OCI-LY7 (cell line): ENCODE measurements at regions of chr19 and their contacts with region 1.

Region 1: DNA sequence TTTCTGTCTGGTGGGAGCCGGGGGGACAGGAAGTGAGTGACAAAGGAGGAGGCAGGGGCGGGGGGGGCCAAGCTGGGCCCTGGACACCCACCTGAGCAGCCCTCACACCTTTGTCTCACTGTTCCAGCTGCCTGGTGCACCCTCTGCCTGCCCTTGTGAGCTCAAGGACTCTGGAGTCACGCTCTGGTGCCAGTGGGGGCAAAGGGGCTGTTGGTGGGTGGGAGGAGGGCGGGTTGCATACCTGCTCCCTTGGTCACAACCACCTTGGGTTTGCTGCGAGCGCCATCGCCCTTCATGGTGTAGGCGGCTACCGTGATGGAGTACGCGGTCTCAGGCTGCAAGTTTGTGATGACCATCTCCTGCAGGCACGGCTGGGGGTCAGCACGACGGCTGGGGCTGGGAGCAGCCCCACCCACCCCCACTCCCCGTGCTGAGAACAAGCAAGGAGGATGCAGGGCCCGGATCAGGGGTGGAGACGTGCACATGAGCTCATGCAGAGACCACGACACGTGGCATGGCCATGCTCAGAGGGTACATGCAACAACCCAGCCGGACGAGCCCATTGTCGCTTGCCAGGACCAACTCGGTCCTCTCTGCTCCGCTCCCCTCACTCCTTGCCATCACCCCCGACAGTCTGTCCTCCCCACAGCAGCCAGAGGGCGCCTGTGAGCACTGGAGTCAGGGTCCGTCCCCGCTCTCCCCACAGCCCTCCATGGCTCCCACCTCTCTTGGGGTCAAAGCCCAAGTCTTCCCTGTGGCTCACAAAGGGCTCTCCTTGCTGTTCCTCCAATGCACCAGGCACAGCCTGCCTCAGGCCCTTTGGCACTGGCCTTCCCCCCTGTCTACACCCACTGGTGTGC is 114.9 kb downstream of the PTPRS start:
- DNase-seq: peak; percentile 33
- H3K4me3 ChIP-seq: no peak overlapping the region
- H3K27ac ChIP-seq: no peak overlapping the region
- H3K4me1 ChIP-seq: no peaks in the 10 kb centered on the region
- CTCF ChIP-seq: peak; percentile 79

Region 2: DNA sequence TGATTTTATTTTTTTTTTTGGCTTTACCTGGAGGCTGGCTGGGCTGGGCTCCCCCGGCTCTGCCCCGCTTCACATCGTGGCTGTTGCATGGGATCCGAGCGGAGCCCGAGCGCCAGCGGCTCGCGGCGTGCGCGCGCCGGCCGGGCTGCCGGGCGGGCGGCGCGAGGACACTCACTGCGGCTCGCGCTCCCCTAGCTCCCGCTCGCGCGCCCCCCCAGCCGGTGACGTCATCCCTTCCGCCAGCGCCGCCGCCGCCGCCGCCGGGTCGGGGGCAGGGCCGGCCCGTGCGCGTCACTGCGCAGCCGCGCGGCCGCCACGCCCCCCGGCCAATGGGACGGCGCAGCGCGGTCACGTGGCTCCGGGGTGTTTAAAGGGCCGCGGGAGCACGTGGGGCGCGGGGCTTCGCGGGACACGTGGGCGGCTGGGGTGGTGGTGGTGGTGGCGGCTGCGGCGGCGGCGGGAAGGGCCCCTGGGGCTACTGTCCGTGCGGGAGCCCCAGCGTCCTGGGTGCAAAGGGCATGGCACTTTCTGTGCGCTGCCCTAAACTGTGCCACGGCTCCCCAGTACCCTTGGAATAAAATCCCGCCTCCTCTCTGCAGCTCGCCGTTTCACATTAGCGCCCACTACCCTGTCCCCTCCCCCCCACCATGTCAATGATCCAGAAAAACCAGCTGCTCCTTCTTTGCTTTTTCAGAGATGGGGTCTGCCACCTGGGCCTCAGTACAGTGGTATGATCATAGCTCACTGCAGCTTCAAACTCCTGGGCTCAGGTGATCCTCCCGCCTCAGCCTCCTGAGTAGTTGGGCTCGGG is 115.1 kb after region 1 on chr19 and contains the start of gene PTPRS:
- CTCF ChIA-PET with region 1: no interaction called
- POLR2A ChIA-PET with region 1: no interaction called
- intact Hi-C with region 1: loop called (anchors 5 kb)
- DNase-seq: peak; percentile 88
- H3K4me3 ChIP-seq: peak within 1 kb of the TSS; percentile 77
- H3K27ac ChIP-seq: peak within 1 kb of the TSS; percentile 37
- H3K4me1 ChIP-seq: peaks cover 41% of the 10 kb centered on the region
- CTCF ChIP-seq: no peak
- total RNA-seq, gene PTPRS: 39.0 and 48.5 TPM in 2 replicates